Prostate gland (tissue), 2 donors: ENCODE measurements at regions of chr19 and their contacts with region 1.

Region 1: GRCh38 chr19:9584073-9584833 is at the start of gene ZNF121:
- DNase-seq: peak; percentile 76
- H3K4me3 ChIP-seq: peak within 1 kb of the TSS; percentile 74 to 83
- H3K27ac ChIP-seq: peak within 1 kb of the TSS; percentile 94 to 97
- H3K4me1 ChIP-seq: no peaks in the 10 kb centered on the region
- H3K27me3 ChIP-seq: no peaks in the 10 kb centered on the region
- CTCF ChIP-seq: peak in 1 of 4 experiments; percentile 24
- POLR2A ChIP-seq: peak; percentile 55
- total RNA-seq, gene ZNF121: 31.6 to 31.7 TPM

Region 2: DNA sequence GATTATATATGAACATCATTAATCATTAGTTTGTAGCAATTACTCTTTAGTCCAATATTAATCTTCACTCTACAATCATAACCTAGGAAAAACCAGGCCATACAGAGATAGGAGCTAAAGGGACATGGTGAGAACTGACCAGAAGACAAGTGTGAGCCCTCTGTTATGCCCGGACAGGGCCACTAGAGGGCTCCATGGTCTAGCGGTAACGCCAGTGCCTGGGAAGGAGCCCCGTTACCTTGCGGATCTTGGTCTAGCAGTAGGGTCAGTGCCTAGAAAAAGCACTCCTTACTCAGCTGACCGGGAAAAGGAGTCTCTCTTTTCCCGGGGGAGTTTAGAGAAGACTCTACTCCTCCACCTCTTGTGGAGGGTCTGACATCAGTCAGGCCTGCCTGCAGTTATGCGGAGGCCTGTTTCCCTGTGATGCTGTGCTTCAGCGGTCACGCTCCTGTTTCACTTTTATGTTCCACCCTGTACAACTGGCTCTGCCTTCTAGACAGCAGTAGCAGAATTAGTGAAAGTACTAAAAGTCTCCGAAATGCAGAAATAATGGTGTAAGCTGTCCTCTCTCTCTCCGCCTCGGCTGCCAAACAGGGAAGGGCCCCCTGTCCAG is 378.6 kb before region 1 on chr19:
- intact Hi-C with region 1: loop called (anchors 10 kb)
- DNase-seq: peak; percentile 58
- H3K4me3 ChIP-seq: no peak overlapping the region
- H3K27ac ChIP-seq: no peak overlapping the region
- H3K4me1 ChIP-seq: no peaks in the 10 kb centered on the region
- H3K27me3 ChIP-seq: no peaks in the 10 kb centered on the region
- CTCF ChIP-seq: peak; percentile 55 to 79 (median 68)
- POLR2A ChIP-seq: no peak